ENCODE measurements at regions of chr3 and their contacts with region 1.

Region 1: GRCh38 chr3:168165390-168166269 is 69.9 kb upstream of the GOLIM4 start:
- DNase-seq: peak; percentile 53
- H3K4me3 ChIP-seq: no peak overlapping the region
- H3K27ac ChIP-seq: peak overlapping the region; percentile 42
- H3K4me1 ChIP-seq: peaks cover 7% of the 10 kb centered on the region
- H3K27me3 ChIP-seq: peaks cover 2% of the 10 kb centered on the region
- CTCF ChIP-seq: peak; percentile 73 to 77

Region 2: GRCh38 chr3:167929968-167930367 is 235.7 kb before region 1 on chr3:
- CTCF ChIA-PET with region 1: no interaction called
- dilution Hi-C with region 1: no loop called
- in situ Hi-C with region 1: no loop called
- intact Hi-C with region 1: loop called (anchors 2 kb)
- DNase-seq: no peak
- H3K4me3 ChIP-seq: no peak overlapping the region
- H3K27ac ChIP-seq: no peak overlapping the region
- H3K4me1 ChIP-seq: no peaks in the 10 kb centered on the region
- H3K27me3 ChIP-seq: no peaks in the 10 kb centered on the region
- CTCF ChIP-seq: no peak

Region 3: GRCh38 chr3:168047190-168047795 is 118.3 kb before region 1 on chr3:
- CTCF ChIA-PET with region 1: no interaction called
- dilution Hi-C with region 1: no loop called
- in situ Hi-C with region 1: loop called (anchors 5 to 10 kb)
- intact Hi-C with region 1: loop called (anchors 1 kb)
- DNase-seq: peak; percentile 73
- H3K4me3 ChIP-seq: no peak overlapping the region
- H3K27ac ChIP-seq: no peak overlapping the region
- H3K4me1 ChIP-seq: no peaks in the 10 kb centered on the region
- H3K27me3 ChIP-seq: no peaks in the 10 kb centered on the region
- CTCF ChIP-seq: peak; percentile 83 to 85

Measured in mammary epithelial cell (primary cell).